PC-9 (cell line): ENCODE measurements at regions of chr12 and their contacts with region 1.

Region 1: DNA sequence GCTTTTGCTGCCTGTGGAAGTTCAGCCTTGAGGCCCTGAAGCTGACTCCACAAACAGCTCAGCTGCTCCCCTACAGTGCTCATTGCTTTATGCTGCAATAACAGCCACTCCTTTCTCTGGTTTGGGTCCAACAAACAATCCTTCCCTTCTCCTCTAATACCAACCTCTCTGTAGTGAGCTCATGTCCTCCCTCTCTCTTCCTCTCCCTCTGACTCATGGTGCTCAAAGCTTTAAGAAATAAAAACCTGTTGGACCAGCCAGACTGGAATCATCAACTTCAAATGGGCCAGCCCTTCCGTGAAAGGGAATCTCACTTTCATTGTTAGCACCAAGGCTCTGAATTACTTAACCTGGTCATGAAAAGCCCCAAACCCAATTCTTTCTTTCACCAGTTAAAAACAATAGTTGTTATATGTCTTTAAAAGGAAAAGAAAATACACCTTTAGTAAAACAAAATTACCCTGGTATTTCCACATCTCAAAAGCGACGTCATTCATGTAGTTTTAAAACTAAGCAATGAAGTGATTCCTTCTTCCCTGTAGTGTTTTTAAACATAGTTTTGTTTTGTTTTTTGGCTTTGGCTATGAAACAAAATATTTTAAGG is 126.4 kb downstream of the DUSP6 start:
- DNase-seq: peak; percentile 69 to 98
- H3K4me3 ChIP-seq: peak overlapping the region; percentile 30; the same call in 1 of the 2 replicates
- H3K27ac ChIP-seq: peak overlapping the region; percentile 93
- H3K4me1 ChIP-seq: peaks cover 55% of the 10 kb centered on the region
- H3K27me3 ChIP-seq: no peaks in the 10 kb centered on the region
- CTCF ChIP-seq: no peak

Region 2: DNA sequence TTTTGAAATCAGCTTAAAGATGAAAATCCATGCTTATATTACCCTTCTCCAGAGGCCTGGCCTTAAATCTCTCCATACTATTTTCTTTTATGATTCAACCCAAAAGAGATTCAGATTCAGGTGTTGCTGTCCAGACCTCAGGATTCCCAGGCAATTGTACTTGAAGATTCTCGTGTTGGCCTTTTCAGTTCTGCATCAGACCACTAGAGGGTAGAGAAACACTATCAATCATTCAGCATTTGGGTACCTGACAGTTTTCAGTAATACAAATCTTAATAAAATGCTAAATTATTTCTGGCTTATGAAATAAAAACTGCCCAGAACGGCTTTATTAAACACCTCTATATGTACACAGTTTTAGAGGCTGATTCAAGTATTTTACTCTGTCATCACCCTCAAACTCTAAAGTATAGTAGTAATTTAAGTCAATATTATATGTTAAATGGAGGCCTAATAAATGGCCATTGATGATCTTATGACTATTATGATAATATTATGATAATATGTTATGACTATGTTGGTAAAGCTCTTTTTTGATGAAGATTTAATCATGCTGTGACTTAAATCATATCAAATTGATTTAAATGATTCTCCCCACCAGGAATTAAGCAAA is 174.7 kb before region 1 on chr12:
- CTCF ChIA-PET with region 1: no interaction called
- POLR2A ChIA-PET with region 1: no interaction called
- intact Hi-C with region 1: loop called (anchors 5 kb)
- DNase-seq: peak; percentile 18 to 53
- H3K4me3 ChIP-seq: no peak overlapping the region
- H3K27ac ChIP-seq: no peak overlapping the region
- H3K4me1 ChIP-seq: no peaks in the 10 kb centered on the region
- H3K27me3 ChIP-seq: no peaks in the 10 kb centered on the region
- CTCF ChIP-seq: peak; percentile 97

Region 3: GRCh38 chr12:89117448-89118034 is 108.4 kb before region 1 on chr12:
- CTCF ChIA-PET with region 1: no interaction called
- POLR2A ChIA-PET with region 1: no interaction called
- intact Hi-C with region 1: loop called (anchors 1 kb)
- DNase-seq: peak; percentile 84 to 95
- H3K4me3 ChIP-seq: no peak overlapping the region
- H3K27ac ChIP-seq: peak overlapping the region; percentile 79
- H3K4me1 ChIP-seq: peaks cover 29% of the 10 kb centered on the region
- H3K27me3 ChIP-seq: no peaks in the 10 kb centered on the region
- CTCF ChIP-seq: no peak

Region 4: DNA sequence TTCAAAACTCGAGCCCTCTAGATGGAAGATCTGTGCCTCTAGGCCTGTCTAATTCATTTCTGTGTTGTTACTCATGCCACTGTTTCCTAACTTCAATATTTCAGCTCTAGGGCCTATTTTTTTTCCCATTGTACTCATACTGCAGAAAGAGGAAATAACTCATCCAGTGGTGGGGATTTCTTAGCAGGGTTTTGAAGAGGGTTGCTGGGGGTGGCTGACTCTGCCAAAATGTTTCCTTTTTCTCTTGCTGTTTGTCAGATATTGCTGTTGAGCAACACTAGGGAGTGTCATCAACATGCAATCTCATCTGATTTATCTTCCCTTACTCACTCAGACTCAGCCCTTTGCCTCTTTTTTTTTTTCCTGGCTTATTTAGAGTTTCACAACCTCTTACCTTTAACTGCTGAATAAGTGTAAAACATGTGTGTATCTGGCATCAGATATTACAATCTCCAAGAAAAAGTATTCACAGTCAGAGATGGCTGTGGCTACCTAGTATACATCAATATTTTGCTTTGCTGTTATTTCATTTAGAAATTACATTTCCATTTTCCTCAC is 63.1 kb before region 1 on chr12:
- CTCF ChIA-PET with region 1: no interaction called
- POLR2A ChIA-PET with region 1: no interaction called
- intact Hi-C with region 1: loop called (anchors 1 kb)
- DNase-seq: peak; percentile 58 to 97
- H3K4me3 ChIP-seq: no peak overlapping the region
- H3K27ac ChIP-seq: peak overlapping the region; percentile 92
- H3K4me1 ChIP-seq: peaks cover 71% of the 10 kb centered on the region
- H3K27me3 ChIP-seq: no peaks in the 10 kb centered on the region
- CTCF ChIP-seq: no peak

Region 5: DNA sequence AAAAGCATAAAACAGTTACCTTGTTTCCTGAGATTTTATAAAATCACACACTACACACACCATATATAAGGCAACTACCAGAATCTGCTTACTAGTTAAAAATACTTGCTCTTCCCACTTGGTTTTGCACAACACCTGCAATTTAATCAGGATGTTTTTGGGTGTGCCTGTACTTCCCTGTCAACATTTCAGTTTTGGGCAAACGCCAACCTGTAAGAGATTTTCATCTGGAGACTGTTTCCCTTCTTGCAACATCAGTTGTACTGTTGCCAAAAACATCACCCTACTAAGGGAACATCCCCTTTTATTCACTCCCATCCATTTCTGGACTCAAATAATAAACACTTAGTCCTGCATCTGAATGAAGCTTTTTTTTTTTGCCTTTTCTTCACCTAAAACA is 45.9 kb before region 1 on chr12:
- CTCF ChIA-PET with region 1: no interaction called
- POLR2A ChIA-PET with region 1: interaction called, 3 read pairs
- intact Hi-C with region 1: loop called (anchors 1 kb)
- DNase-seq: peak; percentile 50 to 88
- H3K4me3 ChIP-seq: no peak overlapping the region
- H3K27ac ChIP-seq: peak overlapping the region; percentile 68
- H3K4me1 ChIP-seq: peaks cover 56% of the 10 kb centered on the region
- H3K27me3 ChIP-seq: no peaks in the 10 kb centered on the region
- CTCF ChIP-seq: no peak

Region 6: DNA sequence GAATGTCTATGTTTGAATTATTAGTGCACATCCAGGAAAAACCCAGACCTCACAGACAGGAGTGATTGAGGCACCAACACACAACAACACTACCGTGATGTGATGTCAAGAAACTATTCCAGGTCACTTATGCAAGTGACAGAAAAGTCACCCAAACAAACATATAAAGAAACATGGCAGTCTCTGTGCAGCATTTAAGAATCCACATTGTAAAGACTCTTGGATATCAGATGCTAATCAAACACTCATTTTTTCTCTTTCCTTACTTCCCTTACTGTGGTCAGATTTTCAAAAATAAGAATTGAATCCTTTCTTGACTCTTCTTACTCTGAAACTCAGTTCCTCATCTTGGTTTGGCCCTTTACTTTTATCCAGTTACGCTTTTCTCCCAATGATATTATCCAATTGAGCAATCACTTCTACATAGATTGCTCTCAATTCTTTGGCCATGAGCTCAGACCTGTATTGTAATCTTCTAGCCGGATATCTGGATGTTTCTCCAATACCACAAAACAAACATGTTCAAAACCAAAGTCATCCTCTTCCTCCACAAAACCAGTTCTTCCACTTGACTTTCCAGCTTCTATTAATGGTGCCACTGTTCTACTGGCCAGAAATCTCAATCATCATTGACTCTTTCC is 11.0 kb after region 1 on chr12:
- CTCF ChIA-PET with region 1: no interaction called
- POLR2A ChIA-PET with region 1: no interaction called
- intact Hi-C with region 1: loop called (anchors 1 kb)
- DNase-seq: peak; percentile 28 to 96
- H3K4me3 ChIP-seq: peak overlapping the region; percentile 26; the same call in 1 of the 2 replicates
- H3K27ac ChIP-seq: peak overlapping the region; percentile 87
- H3K4me1 ChIP-seq: peaks cover 37% of the 10 kb centered on the region
- H3K27me3 ChIP-seq: no peaks in the 10 kb centered on the region
- CTCF ChIP-seq: no peak

Region 7: GRCh38 chr12:90253674-90254181 is 1027.8 kb after region 1 on chr12:
- CTCF ChIA-PET with region 1: no interaction called
- POLR2A ChIA-PET with region 1: no interaction called
- intact Hi-C with region 1: no loop called
- DNase-seq: peak; percentile 60 to 65
- H3K4me3 ChIP-seq: no peak overlapping the region
- H3K27ac ChIP-seq: no peak overlapping the region
- H3K4me1 ChIP-seq: no peaks in the 10 kb centered on the region
- H3K27me3 ChIP-seq: no peaks in the 10 kb centered on the region
- CTCF ChIP-seq: no peak